ENCODE measurements at regions of chr12 and their contacts with region 1.

Region 1: DNA sequence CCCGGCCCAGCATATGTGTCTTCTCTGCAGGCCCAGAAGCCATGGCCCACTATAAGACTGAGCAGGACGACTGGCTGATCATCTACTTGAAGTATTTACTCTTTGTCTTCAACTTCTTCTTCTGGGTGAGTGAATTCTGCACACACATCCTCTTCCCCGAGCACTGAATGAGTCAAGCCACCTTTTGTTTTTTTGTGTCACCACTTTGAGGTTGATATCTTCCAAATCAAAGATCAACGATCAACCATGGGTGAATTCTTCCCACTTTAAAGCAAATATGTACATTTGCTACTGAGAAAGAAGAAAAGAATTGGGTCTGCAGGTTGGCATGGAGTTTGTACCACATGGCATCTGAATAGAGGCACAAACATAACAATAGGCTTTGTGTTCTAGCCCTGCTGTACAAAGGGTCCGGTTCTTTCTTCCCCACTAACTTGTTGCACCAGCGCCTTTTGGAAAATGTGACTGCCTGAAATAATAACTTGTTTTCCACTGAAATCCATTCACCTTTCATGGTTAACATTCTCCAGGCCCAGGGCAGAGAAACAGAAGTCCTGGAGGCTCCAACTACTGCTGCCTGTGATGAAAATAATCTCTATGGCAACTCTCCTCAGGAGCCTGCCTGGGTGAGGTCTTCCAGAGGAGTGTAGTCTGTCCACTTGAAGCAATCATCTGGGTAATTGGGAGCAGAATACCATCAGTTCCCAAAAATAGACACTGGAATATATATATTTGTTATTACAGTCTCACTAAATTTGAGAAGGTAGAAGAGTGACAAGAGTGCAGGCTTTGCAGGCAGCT is 27.6 kb downstream of the TSPAN11 start:
- DNase-seq: no peak
- H3K4me3 ChIP-seq: no peak overlapping the region
- H3K27ac ChIP-seq: no peak overlapping the region
- H3K4me1 ChIP-seq: no peaks in the 10 kb centered on the region
- H3K27me3 ChIP-seq: no peaks in the 10 kb centered on the region
- CTCF ChIP-seq: no peak
- POLR2A ChIP-seq: no peak

Region 2: DNA sequence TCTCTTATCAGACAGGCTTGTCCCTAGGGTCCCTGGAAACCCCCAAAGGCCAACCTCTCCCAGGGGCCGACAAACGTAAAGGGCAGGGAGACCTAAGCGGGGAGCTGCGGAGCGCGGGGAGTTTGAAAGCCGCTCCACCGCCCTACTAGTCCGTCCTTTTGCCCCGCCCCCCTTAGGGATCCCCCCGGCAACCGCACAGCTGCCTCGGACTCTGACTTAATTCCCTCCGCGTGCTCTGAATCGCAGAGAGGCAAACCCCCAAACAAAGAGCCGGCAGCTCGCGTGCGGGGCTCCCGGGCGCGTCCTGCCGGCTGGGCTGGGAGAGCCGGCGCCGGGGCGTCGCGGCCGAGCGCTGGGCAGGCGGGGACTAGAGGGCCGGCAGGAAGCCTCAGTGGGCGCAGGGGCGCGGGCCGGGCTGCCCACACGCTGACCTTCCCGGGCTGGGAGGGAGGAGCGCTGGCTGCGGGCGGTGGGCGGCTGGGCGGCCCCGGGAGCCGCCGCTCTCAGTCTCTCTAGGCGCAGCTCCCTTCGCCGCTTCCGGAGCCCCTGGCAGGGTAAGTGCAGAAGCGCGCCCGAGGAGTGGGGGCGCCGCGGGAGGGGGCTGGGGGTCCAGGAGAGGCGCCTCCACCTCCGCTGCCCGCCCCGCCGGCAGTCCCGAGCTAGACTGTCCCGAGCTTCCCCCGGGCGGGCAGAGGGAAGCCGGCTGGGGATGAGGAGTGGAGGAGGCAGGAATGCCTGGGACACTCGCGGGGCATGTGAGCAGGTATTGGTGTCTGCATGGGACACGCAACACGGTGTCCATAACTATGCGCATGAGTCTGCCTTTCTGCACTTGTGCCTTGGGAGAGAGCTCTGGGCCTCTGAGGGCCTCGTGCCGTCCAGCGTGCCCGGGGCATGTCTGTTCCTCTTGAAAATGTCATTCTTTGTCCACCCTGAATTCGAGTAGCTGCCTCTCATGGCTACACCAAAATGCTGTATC is 27.6 kb before region 1 on chr12 and contains the start of gene TSPAN11:
- intact Hi-C with region 1: loop called (anchors 2 kb)
- DNase-seq: no peak
- H3K4me3 ChIP-seq: peak within 1 kb of the TSS; percentile 31 to 76 (median 54)
- H3K27ac ChIP-seq: peak within 1 kb of the TSS in 1 of 2 donors; percentile 35
- H3K4me1 ChIP-seq: no peaks in the 10 kb centered on the region
- H3K27me3 ChIP-seq: peaks cover 0 to 8% of the 10 kb centered on the region in 2 donors
- CTCF ChIP-seq: no peak
- POLR2A ChIP-seq: no peak
- total RNA-seq, gene TSPAN11: 0.48 to 1.3 (median 0.73) TPM

Measured in breast epithelium (tissue), 4 donors.